Endothelial cell of umbilical vein (primary cell): ENCODE measurements at regions of chr3 and their contacts with region 1.

Region 1: GRCh38 chr3:8324740-8325139 is 176.9 kb upstream of the LMCD1 start:
- DNase-seq: peak; percentile 21
- H3K4me3 ChIP-seq: no peak overlapping the region
- H3K27ac ChIP-seq: no peak overlapping the region
- H3K4me1 ChIP-seq: peaks cover under 1% of the 10 kb centered on the region
- H3K27me3 ChIP-seq: peaks cover 0 to 2% of the 10 kb centered on the region in 2 experiments
- CTCF ChIP-seq: peak in 1 of 2 donors; percentile 60
- POLR2A ChIP-seq: no peak

Region 2: GRCh38 chr3:8301728-8302462 is 22.8 kb before region 1 on chr3:
- CTCF ChIA-PET with region 1: interaction called, 18 read pairs
- POLR2A ChIA-PET with region 1: no interaction called
- dilution Hi-C with region 1: no loop called
- intact Hi-C with region 1: no loop called
- DNase-seq: peak; percentile 34
- H3K4me3 ChIP-seq: no peak overlapping the region
- H3K27ac ChIP-seq: no peak overlapping the region
- H3K4me1 ChIP-seq: no peaks in the 10 kb centered on the region
- H3K27me3 ChIP-seq: no peaks in the 10 kb centered on the region
- CTCF ChIP-seq: peak; percentile 49 to 54
- POLR2A ChIP-seq: no peak

Region 3: GRCh38 chr3:8607234-8608040 is 282.7 kb after region 1 on chr3:
- CTCF ChIA-PET with region 1: interaction called, 5 read pairs
- POLR2A ChIA-PET with region 1: no interaction called
- dilution Hi-C with region 1: no loop called
- intact Hi-C with region 1: loop called (anchors 2 kb)
- DNase-seq: peak; percentile 78
- H3K4me3 ChIP-seq: no peak overlapping the region
- H3K27ac ChIP-seq: no peak overlapping the region
- H3K4me1 ChIP-seq: no peaks in the 10 kb centered on the region
- H3K27me3 ChIP-seq: peaks cover 0 to 2% of the 10 kb centered on the region in 2 experiments
- CTCF ChIP-seq: peak; percentile 54 to 79
- POLR2A ChIP-seq: no peak

Region 4: GRCh38 chr3:8622873-8623691 is 298.3 kb after region 1 on chr3:
- CTCF ChIA-PET with region 1: interaction called, 14 read pairs
- POLR2A ChIA-PET with region 1: no interaction called
- dilution Hi-C with region 1: no loop called
- intact Hi-C with region 1: loop called (anchors 1 kb)
- DNase-seq: peak; percentile 63
- H3K4me3 ChIP-seq: no peak overlapping the region
- H3K27ac ChIP-seq: no peak overlapping the region
- H3K4me1 ChIP-seq: peaks cover 4% of the 10 kb centered on the region
- H3K27me3 ChIP-seq: no peaks in the 10 kb centered on the region
- CTCF ChIP-seq: peak; percentile 75 to 96
- POLR2A ChIP-seq: no peak